ENCODE measurements at regions of chr11 and their contacts with region 1.

Region 1: GRCh38 chr11:125592305-125593112 is at the start of gene STT3A:
- DNase-seq: peak; percentile 100
- ATAC-seq: peak; percentile 99
- total RNA-seq, gene STT3A: 61.2 TPM

Region 2: GRCh38 chr11:125625630-125626287 is 33.2 kb after region 1 on chr11:
- intact Hi-C with region 1: loop called (anchors 5 kb)
- DNase-seq: peak; percentile 92
- ATAC-seq: peak; percentile 97

Region 3: DNA sequence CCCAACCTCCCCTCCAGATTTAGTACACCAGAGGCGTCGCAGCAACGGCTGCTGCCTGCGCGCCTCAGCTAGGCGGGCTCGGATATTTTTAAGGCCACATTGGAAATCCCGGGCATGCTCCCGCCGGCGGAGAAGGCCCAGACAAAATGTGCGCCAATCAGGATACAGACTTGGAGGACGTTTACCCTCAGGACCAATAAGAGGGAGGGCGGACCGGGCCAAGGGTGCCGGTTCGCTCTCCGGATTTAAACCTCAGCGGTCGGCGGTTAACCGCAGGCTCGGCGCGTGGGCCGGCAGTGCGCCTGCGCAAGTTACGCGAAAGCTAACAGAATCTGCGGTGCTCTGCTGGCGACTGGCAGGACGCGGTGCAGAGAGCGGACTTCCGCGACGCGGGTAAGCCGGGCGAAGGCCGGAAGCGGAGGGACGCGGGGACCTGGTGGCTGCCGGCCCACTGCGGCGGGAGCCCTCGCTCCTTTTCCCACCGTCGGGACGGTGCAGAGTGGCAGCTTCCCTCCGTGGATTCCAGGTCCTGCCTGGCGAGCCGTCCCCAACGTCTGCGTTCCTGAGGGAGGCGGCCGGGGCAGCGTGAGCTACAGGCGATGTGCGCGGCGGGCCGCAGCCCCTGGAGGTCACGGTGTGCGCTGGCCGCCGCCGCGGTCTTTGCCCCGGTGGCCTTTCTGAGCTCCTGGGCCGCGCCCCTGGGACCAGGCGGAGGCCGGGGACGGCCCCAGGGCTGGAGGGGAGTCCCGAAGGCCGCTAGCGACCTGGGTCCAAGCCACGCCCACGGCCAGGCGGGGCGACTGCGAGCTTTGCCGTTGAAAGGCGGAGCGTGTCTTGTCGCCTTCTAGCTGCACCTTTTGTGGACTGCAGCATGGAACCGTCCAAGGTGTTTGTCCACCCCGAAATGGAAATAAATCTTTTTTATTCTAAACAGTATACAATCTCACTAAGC is 295.1 kb after region 1 on chr11 and contains the start of gene HYLS1:
- intact Hi-C with region 1: loop called (anchors 10 kb)
- DNase-seq: peak; percentile 95
- ATAC-seq: peak; percentile 99
- total RNA-seq, gene HYLS1: 5.0 TPM

Measured in Right ventricle myocardium inferior (tissue), 1 donor.